ENCODE measurements at regions of chr3 and their contacts with region 1.

Region 1: DNA sequence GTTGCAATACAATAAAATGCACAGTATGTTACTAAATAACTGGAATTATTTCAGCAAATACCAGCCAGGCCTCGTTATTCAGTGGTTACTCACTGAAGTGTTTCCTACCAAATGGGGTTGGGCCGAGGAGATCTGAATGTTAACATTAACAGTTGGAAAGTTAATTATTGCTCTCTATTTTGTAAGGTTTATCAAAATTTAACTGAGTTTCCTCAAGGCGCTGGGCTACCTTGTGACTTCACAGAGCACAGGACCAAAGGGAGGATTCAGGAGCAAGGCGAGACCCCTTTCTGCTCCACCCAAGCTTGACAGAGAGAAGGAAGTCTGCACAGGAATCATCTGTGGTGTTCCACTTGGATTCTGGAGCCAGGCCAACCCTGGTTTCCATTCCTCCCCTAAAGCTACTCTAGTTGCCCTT is 21.6 kb downstream of the ADAMTS9 start:
- DNase-seq: no peak
- H3K4me3 ChIP-seq: no peak overlapping the region
- H3K27ac ChIP-seq: peak overlapping the region in 1 of 2 donors; percentile 23
- H3K4me1 ChIP-seq: no peaks in the 10 kb centered on the region
- H3K27me3 ChIP-seq: no peaks in the 10 kb centered on the region
- CTCF ChIP-seq: no peak
- POLR2A ChIP-seq: no peak

Region 2: GRCh38 chr3:64612082-64612860 is 53.9 kb before region 1 on chr3:
- intact Hi-C with region 1: loop called (anchors 5 kb)
- DNase-seq: no peak
- H3K4me3 ChIP-seq: no peak overlapping the region
- H3K27ac ChIP-seq: peak overlapping the region; percentile 32 to 67
- H3K4me1 ChIP-seq: no peaks in the 10 kb centered on the region
- H3K27me3 ChIP-seq: no peaks in the 10 kb centered on the region
- CTCF ChIP-seq: no peak
- POLR2A ChIP-seq: no peak

Region 3: DNA sequence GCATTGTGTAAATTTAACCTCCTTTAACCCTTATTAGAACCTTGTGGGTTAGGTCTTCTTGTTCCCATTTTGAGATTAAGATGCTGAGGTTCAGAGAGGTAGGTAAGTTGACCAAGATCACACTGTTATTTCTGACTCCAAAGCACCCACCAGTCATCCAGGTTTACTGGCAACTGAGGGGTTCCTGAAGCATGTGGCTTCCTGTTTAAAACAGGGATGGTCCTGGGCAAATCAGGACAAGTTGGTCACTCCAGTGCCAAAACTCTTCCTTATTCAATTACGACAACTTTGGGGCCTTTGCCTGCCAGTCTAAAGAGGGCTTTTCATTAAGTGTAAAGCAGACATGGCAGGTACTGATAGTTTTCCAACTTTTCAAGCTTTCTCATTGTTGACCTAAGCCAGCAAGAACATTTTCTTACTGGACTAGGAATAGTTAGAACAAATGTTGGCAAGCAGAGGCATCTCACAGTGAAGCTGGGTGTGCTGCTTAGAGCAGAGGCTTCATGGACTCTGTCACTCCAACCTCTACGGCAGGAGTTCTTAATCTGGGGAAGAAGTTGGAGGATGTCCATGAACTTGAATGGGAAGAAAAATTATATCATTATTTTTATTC is 171.1 kb after region 1 on chr3:
- intact Hi-C with region 1: no loop called
- DNase-seq: peak; percentile 78
- H3K4me3 ChIP-seq: no peak overlapping the region
- H3K27ac ChIP-seq: peak overlapping the region; percentile 1 to 20
- H3K4me1 ChIP-seq: no peaks in the 10 kb centered on the region
- H3K27me3 ChIP-seq: no peaks in the 10 kb centered on the region
- CTCF ChIP-seq: no peak
- POLR2A ChIP-seq: no peak